H1 (cell line): ENCODE measurements at regions of chr17 and their contacts with region 1.

Region 1: DNA sequence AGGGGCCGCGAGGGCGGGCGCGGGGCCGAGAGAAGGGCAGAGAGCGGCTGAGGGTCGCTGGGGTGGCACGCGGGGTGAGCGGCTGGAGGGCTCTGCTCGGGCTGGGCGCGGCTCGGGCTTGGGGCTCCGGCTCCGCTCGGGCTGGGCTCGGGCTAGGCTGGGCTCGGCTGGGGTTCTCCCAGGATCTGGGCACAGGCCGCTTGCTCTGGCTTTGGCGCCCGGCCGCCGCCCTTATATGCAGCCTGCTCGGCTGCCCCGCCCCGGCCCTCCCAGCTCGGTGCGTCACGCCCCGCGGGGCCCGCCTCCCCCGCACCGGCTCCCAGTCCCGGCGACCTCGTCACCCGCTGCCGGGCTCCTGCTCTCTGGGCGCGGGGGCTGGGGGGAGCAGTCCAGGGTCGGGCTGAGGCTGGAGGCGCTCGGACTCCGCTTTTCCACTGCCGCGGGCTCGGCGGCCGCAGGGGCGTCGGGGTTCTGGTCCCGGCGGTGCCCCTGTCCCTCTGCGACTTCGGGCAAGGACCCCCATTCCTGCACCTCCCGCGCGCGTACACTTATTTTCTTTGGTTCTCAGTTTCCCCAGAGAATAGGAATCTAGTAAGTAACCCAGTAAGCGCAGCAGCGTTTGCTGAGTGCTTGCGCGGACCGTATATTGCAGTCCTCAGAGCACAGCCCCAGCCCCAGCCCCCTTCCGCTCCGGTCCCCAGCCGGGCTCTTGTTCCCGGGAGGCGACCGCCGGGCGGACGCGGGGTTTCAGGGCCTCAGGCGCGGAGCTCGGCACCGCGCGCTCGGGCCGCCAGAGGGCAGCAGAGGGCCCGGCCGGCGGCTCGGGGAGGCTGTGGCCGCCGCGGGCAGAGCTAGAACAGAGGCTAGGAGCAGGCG is at the start of gene RASD1:
- DNase-seq: peak in 1 of 2 experiments; percentile 93
- H3K4me3 ChIP-seq: peak within 1 kb of the TSS; percentile 43 to 70 (median 59)
- H3K27ac ChIP-seq: no peak within 1 kb of the TSS
- H3K4me1 ChIP-seq: peaks cover 5 to 29% (median 22%) of the 10 kb centered on the region in 4 experiments
- H3K27me3 ChIP-seq: peaks cover 14 to 26% (median 22%) of the 10 kb centered on the region in 4 experiments; a peak in 6 of 7 replicates
- CTCF ChIP-seq: peak; percentile 78 to 97 (median 81)
- EP300 ChIP-seq: peak in 1 of 2 experiments; percentile 70; a peak in 1 of 3 replicates
- POLR2A ChIP-seq: peak in 1 of 2 experiments; percentile 98; a peak in 2 of 3 replicates
- RAD21 ChIP-seq: peak; percentile 71 to 93
- total RNA-seq, gene RASD1: 1.8 and 2.6 TPM in 2 replicates

Region 2: DNA sequence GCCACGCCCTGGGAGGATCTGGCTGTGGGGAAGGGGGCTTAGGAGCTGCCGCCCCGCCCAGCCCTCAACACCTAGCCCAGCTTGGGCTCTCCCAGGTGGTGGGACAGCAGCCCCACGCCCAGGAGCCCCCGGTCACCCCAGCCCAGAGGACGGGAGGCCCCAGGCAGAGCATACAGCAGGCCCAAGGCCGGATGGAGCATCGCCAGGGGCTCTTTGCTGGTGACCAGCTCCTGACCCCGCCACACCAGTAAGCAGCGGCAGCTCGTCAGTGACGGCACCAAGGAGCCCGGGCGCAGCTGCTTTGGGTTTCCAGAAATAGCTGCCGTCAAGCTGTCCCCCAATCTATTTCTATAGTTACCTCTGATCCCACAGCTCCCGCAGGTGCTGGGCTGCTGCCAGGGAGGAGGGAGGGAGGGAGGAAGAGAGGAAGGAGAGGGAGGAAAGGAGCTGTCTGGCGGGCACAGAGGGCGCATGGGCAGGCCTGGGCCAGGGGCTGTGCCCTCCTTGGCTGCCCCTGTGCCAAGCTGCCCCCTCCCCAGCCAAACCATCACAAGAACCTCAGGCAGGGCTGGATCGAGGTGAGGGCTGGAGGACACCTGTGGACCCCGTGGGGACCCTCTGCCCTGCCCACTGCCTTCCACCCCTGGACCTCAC is 10.5 kb after region 1 on chr17:
- CTCF ChIA-PET with region 1: interaction called, 47 read pairs
- POLR2A ChIA-PET with region 1: interaction called, 26 read pairs
- DNase-seq: no peak
- H3K4me3 ChIP-seq: no peak overlapping the region
- H3K27ac ChIP-seq: no peak overlapping the region
- H3K4me1 ChIP-seq: peaks cover 0 to 2% (median 0%) of the 10 kb centered on the region in 4 experiments; a peak in 1 of 7 replicates
- H3K27me3 ChIP-seq: no peaks in the 10 kb centered on the region; a peak in 1 of 7 replicates
- CTCF ChIP-seq: no peak
- EP300 ChIP-seq: no peak
- POLR2A ChIP-seq: no peak
- RAD21 ChIP-seq: no peak

Region 3: DNA sequence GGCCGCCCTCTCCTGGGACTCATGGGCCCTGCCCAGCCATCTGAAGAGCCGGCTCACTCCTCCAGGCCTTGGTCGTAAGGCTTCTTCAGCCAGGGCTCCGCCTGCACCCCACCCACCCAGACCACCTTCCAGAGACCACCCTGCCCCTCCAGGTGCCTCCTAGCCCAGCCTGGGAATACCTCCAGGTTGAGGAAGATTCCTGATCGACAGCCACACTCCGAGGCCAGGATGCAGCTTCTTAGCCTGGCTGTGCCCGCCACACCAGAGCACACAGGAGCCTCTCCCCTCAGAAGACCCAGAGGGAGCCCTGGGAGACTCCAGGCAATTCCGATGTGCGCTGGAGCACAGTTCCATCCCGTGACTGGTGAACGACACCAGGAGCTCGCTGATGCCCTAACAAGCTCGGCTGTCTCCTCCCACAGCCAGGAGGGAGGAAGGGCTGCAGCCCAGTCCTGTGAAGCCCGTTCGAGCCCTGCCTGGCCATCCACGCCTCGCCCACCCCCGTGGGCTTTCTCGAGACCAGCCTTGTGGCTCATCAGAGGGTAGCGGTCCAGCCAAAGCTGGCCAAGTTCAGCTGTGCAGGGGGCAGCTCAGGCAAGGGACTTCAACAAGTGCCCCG is 21.5 kb after region 1 on chr17:
- CTCF ChIA-PET with region 1: interaction called, 19 read pairs
- POLR2A ChIA-PET with region 1: interaction called, 9 read pairs
- DNase-seq: no peak
- H3K4me3 ChIP-seq: no peak overlapping the region
- H3K27ac ChIP-seq: no peak overlapping the region
- H3K4me1 ChIP-seq: peaks cover 4 to 25% (median 19%) of the 10 kb centered on the region in 4 experiments
- H3K27me3 ChIP-seq: no peaks in the 10 kb centered on the region
- CTCF ChIP-seq: no peak
- EP300 ChIP-seq: no peak
- POLR2A ChIP-seq: no peak
- RAD21 ChIP-seq: no peak

Region 4: DNA sequence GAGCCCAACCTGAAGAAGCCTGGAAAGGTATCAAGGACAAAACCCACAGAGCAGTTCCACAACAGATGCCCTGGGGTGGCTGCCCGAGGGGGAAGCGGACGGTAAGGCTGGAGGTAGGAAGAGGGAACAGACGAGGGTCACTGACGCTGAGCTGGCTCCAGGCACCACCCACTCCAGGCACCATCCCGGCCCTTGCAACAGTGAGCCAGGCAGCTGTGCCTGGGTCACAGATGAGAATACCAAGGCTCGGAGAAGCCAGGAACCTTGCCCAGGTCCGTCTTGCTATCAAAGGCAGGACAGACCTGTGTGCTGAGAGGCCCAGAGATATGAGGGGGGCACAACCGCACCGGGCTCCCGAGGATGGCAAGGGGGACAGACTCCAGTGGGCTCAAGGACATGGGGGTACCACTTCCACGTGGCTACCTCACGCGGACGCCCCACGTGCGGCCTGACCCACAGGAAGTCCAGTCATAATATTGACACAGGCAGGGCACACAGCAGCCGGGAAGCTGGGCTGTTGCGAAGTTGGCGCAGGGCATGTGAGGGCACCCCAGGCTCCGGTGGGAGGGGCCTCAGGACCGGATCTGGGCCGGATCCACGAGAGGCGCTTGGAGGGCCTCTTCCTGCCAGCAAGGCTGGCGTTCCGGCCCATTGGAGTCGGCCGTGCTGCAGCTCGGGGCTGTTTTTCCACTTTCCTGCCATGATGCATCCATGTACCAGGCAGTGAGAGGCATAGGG is 65.2 kb after region 1 on chr17:
- CTCF ChIA-PET with region 1: interaction called, 81 read pairs
- POLR2A ChIA-PET with region 1: interaction called, 25 read pairs
- DNase-seq: no peak
- H3K4me3 ChIP-seq: no peak overlapping the region
- H3K27ac ChIP-seq: no peak overlapping the region
- H3K4me1 ChIP-seq: peaks cover 0 to 10% (median 8%) of the 10 kb centered on the region in 4 experiments; a peak in 5 of 7 replicates
- H3K27me3 ChIP-seq: no peaks in the 10 kb centered on the region
- CTCF ChIP-seq: no peak
- EP300 ChIP-seq: no peak
- POLR2A ChIP-seq: no peak
- RAD21 ChIP-seq: no peak

Region 5: GRCh38 chr17:17591355-17592298 is 95.2 kb after region 1 on chr17 and contains the start of gene PEMT:
- CTCF ChIA-PET with region 1: interaction called, 6 read pairs
- POLR2A ChIA-PET with region 1: interaction called, 20 read pairs
- DNase-seq: peak; percentile 90 to 93
- H3K4me3 ChIP-seq: peak within 1 kb of the TSS; percentile 69 to 87 (median 86)
- H3K27ac ChIP-seq: peak within 1 kb of the TSS; percentile 60; the same call in 1 of the 2 replicates
- H3K4me1 ChIP-seq: peaks cover 0 to 10% (median 2%) of the 10 kb centered on the region in 4 experiments; a peak in 4 of 7 replicates
- H3K27me3 ChIP-seq: no peaks in the 10 kb centered on the region
- CTCF ChIP-seq: no peak
- EP300 ChIP-seq: peak in 1 of 2 experiments; percentile 9; a peak in 1 of 3 replicates
- POLR2A ChIP-seq: peak; percentile 4 to 78; a peak in 2 of 3 replicates
- RAD21 ChIP-seq: no peak
- total RNA-seq, gene PEMT: 40.1 and 42.0 TPM in 2 replicates